Panc1 (cell line): ENCODE measurements at regions of chr14 and their contacts with region 1.

Region 1: GRCh38 chr14:95784137-95784536 is 70.2 kb upstream of the TCL1A start:
- DNase-seq: no peak
- ATAC-seq: no peak
- H3K4me3 ChIP-seq: no peak overlapping the region
- H3K27ac ChIP-seq: no peak overlapping the region
- H3K4me1 ChIP-seq: no peaks in the 10 kb centered on the region
- H3K27me3 ChIP-seq: no peaks in the 10 kb centered on the region
- CTCF ChIP-seq: no peak

Region 2: DNA sequence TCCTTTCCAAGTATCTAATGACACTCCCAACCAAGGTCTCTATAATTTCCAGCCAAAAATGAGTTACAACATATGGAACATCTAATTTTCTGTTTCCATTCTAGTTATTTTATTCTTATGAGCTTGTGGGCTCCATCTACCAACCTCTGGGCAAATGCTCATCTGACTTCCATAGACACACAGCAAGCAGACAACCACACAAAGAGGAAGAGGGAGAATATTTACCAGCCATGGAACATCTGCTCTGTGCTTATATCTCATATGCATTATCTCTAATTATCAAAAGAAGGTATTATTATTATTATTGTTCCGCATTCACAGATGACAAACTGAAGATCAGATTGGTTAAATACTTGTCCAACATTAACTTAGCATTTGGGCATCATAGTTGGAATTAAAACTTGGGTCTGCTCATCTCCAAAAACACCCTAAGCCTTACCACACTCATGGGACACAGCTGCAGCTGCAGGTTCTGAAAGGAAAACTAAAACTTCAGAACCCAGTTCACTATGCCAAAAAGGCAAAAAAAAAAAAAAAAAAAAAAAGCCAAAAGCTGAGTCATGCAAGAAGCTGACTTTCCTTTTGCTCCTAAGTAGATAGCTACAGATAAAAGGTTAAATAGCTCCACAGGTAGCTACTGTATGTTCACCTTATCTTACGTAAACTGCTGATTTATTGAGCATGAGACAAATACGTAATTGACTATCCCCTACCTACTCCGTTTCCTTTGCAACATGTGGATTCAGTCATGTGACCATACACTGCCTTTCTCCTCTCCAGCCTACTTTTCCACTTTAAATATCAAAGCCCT is 121.6 kb before region 1 on chr14:
- CTCF ChIA-PET with region 1: no interaction called
- POLR2A ChIA-PET with region 1: interaction called, 16 read pairs
- in situ Hi-C with region 1: no loop called
- intact Hi-C with region 1: no loop called
- DNase-seq: no peak
- ATAC-seq: no peak
- H3K4me3 ChIP-seq: no peak overlapping the region
- H3K27ac ChIP-seq: no peak overlapping the region
- H3K4me1 ChIP-seq: no peaks in the 10 kb centered on the region
- H3K27me3 ChIP-seq: no peaks in the 10 kb centered on the region
- CTCF ChIP-seq: no peak